BJ (cell line): ENCODE measurements at regions of chr10 and their contacts with region 1.

Region 1: DNA sequence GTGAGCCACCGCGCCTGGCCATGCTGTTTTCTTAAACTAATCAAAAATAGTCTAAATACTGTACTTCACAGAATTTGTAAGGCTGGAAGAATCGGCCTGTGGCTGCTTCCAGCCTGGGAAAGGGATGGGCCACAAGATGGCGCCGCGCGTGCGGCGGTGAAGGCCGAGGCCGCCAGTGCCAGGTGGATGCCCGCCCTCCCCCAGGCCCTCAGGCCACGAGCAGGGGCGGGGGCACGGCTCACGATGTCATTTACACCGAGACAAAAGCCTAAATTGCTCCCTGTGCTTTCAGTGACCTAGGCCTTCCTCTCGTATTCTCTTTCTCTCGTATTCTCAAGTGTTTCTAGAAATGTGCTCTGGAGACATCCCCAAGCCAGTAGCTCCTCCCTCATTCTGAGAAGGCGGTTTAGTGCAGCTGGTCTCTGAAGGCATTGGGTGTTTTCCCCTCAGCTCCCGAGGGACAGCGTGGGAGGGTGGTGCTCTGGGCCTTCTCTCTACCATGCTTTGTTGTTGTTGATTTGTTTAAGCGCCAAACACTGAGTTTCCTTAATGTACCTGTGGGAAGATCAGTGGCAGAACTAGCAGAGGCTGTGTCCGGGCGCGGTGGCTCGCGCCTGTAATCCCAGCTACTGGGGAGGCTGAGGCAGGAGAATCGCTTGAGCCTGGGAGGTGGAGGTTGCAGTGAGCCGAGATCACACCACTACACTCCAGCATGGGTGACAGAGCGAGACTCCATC is 68.4 kb downstream of the CDC123 start:
- DNase-seq: peak; percentile 14
- H3K4me3 ChIP-seq: peak overlapping the region; percentile 38
- H3K27me3 ChIP-seq: no peaks in the 10 kb centered on the region
- CTCF ChIP-seq: peak; percentile 82

Region 2: DNA sequence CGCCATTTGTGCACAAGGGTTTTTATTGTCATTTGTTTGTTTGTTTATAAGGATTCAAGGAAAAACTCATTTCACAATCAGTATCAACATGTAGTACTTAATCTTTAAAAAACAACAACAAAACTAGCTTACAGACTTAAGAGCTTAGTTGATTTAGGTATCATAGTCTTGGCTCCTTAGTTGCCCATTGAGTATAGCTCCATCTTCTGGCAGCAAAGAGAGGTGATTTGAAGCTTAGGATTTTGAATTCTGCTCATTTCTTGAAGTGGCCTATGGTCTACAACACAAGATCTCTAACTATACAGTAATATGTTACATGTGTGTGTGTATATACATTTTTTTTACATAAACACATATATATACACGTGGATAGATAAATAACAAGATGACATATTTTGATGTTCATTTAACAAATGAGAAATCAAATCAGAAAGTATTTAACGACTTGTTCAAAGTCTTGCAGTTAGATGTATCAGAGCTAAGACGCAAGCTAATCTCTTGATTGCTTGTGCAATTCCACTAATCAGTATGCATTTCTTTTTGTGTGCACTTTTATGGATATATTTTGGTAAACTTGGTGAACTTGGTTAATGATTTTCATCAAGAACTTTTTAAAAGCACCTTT is 392.3 kb after region 1 on chr10:
- CTCF ChIA-PET with region 1: interaction called, 44 read pairs
- POLR2A ChIA-PET with region 1: no interaction called
- DNase-seq: no peak
- H3K4me3 ChIP-seq: no peak overlapping the region
- H3K27me3 ChIP-seq: no peaks in the 10 kb centered on the region; the same call in 1 of the 2 replicates
- CTCF ChIP-seq: peak; percentile 70

Region 3: DNA sequence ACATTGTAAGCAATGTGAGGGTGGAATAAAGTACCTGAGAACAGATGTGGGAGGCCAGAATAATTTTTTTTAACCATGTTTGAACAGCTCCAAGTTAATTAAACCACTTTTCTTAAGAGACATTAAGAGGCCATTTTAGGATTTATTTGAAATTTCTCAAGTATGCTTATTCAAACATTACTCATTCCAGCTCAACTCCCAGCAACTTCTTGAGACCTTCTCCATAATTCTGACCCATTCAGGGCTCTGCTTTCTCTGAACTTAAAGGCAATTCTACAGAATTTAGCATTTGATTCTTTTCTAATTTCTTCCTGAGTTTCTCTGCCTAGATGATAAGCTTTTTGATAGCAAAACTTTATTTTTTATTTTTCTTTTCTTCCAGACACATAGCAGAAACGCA is 399.5 kb after region 1 on chr10:
- CTCF ChIA-PET with region 1: interaction called, 14 read pairs
- POLR2A ChIA-PET with region 1: no interaction called
- DNase-seq: no peak
- H3K4me3 ChIP-seq: no peak overlapping the region
- H3K27me3 ChIP-seq: no peaks in the 10 kb centered on the region
- CTCF ChIP-seq: no peak

Region 4: DNA sequence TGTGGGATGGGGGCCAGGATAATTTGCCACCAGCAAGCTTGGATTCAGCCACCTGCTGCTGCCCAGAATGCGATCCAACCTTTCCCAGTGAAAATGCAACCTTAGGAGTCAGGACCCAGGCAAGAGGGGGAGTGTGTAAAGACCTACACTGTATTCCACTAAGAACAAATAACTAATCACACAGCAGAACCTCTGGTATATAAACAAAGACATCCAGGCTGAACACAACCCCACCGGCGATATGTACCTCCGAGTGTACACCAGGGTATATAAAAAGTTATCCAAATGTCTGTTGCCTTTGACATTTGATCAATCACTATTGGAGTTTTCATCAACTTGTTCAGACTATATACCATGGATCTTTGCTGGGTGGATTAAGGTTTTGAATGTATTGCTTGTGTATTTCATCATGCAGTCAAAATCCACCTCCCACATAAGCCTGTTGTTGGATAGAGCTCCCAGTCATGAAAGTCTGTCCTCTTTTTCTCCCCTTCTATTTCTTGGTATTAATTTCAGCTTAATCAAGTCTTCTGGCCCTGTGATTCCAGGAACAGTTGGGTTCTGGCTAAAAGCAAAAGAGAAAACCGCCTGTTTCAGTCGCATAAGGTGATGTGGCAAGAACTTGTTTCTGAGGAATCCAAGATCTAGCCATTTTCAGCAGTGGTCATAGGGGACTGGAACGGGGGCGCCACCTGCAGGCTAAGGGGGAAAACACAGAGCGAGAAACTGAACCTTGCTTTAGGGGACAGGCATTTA is 446.4 kb after region 1 on chr10:
- CTCF ChIA-PET with region 1: interaction called, 92 read pairs
- POLR2A ChIA-PET with region 1: no interaction called
- DNase-seq: peak; percentile 46
- H3K4me3 ChIP-seq: no peak overlapping the region
- H3K27me3 ChIP-seq: no peaks in the 10 kb centered on the region; the same call in none of the 2 replicates
- CTCF ChIP-seq: peak; percentile 96